ENCODE measurements at regions of chrX and their contacts with region 1.

Region 1: GRCh38 chrX:56232221-56233082 is at the start of gene KLF8:
- DNase-seq: peak; percentile 61
- H3K4me3 ChIP-seq: peak within 1 kb of the TSS; percentile 30 to 33
- H3K27ac ChIP-seq: peak within 1 kb of the TSS; percentile 68 to 72
- H3K4me1 ChIP-seq: no peaks in the 10 kb centered on the region
- H3K27me3 ChIP-seq: no peaks in the 10 kb centered on the region
- CTCF ChIP-seq: peak in 2 of 4 experiments; percentile 8 to 17
- POLR2A ChIP-seq: peak; percentile 41
- total RNA-seq, gene KLF8: 5.6 to 22.8 TPM

Region 2: GRCh38 chrX:55717521-55718497 is 514.6 kb before region 1 on chrX and contains the start of gene RRAGB:
- intact Hi-C with region 1: loop called (anchors 10 kb)
- DNase-seq: peak; percentile 94
- H3K4me3 ChIP-seq: peak within 1 kb of the TSS; percentile 46 to 49
- H3K27ac ChIP-seq: peak within 1 kb of the TSS; percentile 88
- H3K4me1 ChIP-seq: no peaks in the 10 kb centered on the region
- H3K27me3 ChIP-seq: no peaks in the 10 kb centered on the region
- CTCF ChIP-seq: peak; percentile 33 to 71 (median 52)
- POLR2A ChIP-seq: peak; percentile 22
- total RNA-seq, gene RRAGB: 24.0 to 27.6 TPM

Region 3: DNA sequence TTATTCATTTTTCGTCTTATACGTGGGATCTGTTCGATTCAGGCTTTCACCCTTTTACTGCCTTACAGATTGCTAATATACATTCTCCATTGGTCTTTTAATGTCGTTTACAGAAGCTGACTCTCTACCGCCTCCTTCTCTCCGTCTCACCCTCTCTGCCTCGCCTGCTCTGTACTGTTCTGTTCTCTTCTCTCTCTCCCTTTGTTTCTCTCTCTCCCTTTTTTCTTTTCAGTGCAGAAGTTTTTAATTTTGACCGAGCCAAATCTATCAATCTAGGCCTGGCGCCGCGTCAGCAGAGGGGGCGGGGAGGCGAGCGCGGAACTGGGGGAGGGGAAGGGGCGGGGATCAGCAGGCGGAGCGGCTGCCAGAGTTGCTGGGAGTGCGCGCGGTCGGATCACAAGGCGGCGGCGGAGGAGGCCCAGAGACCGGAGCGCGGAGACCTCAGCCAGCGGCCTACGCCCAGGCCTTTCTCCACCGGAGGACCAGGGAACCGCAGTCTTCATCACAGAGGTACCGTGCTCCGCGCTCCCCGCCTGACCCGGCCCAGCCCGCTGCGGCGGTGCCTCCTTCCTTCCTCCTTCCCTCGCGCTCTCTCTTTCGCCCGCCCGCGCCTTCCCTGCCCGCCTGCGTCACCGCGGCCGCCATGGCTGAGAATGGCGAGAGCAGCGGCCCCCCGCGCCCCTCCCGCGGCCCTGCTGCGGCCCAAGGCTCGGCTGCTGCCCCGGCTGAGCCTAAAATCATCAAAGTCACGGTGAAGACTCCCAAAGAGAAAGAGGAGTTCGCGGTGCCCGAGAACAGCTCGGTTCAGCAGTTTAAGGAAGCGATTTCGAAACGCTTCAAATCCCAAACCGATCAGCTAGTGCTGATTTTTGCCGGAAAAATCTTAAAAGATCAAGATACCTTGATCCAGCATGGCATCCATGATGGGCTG is 331.0 kb after region 1 on chrX and contains the start of gene UBQLN2:
- intact Hi-C with region 1: loop called (anchors 10 kb)
- DNase-seq: peak; percentile 79
- H3K4me3 ChIP-seq: peak within 1 kb of the TSS; percentile 50 to 52
- H3K27ac ChIP-seq: peak within 1 kb of the TSS; percentile 91 to 96
- H3K4me1 ChIP-seq: no peaks in the 10 kb centered on the region
- H3K27me3 ChIP-seq: no peaks in the 10 kb centered on the region
- CTCF ChIP-seq: no peak
- POLR2A ChIP-seq: peak; percentile 74
- total RNA-seq, gene UBQLN2: 31.3 to 33.3 TPM

Measured in prostate gland (tissue), 2 donors.